CD8-positive, alpha-beta T cell (primary cell): ENCODE measurements at regions of chr11 and their contacts with region 1.

Region 1: GRCh38 chr11:117946842-117947526 is 17.8 kb upstream of the TMPRSS13 start:
- DNase-seq: peak; percentile 60 to 93 (median 83)
- ATAC-seq: peak; percentile 13
- H3K4me3 ChIP-seq: no peak overlapping the region
- H3K4me3 Mint-ChIP-seq: peak overlapping the region; percentile 37
- H3K27ac ChIP-seq: no peak overlapping the region
- H3K27ac Mint-ChIP-seq: peak overlapping the region; percentile 66
- H3K4me1 ChIP-seq: peaks cover 51% of the 10 kb centered on the region
- H3K4me1 Mint-ChIP-seq: peaks cover 69% of the 10 kb centered on the region
- H3K27me3 ChIP-seq: no peaks in the 10 kb centered on the region
- H3K27me3 Mint-ChIP-seq: no peaks in the 10 kb centered on the region
- CTCF ChIP-seq: peak; percentile 89

Region 2: DNA sequence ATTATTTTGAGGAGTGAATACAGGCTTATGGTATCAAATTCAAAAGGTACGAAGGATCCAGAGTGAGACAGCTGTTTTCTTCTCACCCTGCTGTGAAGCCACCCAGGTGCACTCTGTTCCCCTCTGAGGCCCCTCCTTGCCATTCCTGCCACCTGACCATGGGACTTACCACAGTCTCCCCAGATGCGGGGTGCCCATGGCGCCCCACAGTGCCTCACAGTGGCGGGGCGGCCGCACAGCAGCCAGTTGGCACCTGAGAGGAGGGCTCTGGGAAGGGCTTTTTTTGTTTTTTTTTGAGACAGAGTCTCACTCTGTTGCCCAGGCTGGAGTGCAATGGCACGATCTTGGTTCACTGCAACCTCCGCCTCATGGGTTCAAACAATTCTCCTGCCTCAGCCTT is 467.6 kb before region 1 on chr11:
- CTCF ChIA-PET with region 1: no interaction called
- POLR2A ChIA-PET with region 1: no interaction called
- intact Hi-C with region 1: no loop called
- DNase-seq: no peak
- ATAC-seq: no peak
- H3K4me3 ChIP-seq: no peak overlapping the region
- H3K4me3 Mint-ChIP-seq: no peak overlapping the region
- H3K27ac ChIP-seq: no peak overlapping the region
- H3K27ac Mint-ChIP-seq: no peak overlapping the region
- H3K4me1 ChIP-seq: no peaks in the 10 kb centered on the region
- H3K4me1 Mint-ChIP-seq: no peaks in the 10 kb centered on the region
- H3K27me3 ChIP-seq: no peaks in the 10 kb centered on the region
- H3K27me3 Mint-ChIP-seq: no peaks in the 10 kb centered on the region
- CTCF ChIP-seq: no peak

Region 3: DNA sequence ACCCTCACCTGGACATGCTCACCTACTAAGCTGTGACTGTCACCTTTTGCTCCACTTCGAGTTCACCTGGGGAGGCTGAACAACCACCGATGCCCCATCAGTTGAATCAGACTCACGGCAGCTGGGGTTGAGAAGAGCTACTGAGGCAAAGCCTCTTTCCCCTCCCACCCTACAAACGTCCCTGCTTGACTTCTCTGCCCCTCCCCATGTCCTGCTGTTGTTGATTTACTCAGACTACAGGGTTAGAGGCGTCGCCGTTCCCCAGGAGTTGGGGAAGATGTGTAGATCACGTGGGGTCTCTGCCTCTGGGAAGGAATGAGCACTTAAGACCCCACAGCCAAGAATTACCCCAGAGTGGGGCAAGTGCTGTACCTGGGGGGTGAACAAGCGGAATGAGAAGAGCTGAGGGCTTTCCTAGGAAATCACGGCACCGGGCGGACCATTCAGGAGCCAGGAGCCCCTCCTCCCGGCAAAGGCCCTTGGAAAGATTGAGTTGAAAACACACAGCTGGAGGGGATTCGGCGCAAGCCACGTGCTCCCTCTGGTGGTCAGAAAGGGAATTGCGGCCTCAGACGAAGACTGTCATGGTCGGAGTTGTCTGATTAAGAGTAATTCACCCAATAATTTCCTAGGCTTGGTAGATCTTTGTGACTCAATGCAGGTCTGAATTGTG is 129.5 kb before region 1 on chr11:
- CTCF ChIA-PET with region 1: interaction called, 258 read pairs
- POLR2A ChIA-PET with region 1: interaction called, 13 read pairs
- intact Hi-C with region 1: loop called in 1 of 2 experiments (anchors 1 kb)
- DNase-seq: peak; percentile 73 to 90 (median 85)
- ATAC-seq: peak; percentile 24
- H3K4me3 ChIP-seq: no peak overlapping the region
- H3K4me3 Mint-ChIP-seq: no peak overlapping the region
- H3K27ac ChIP-seq: peak overlapping the region in 1 of 2 experiments; percentile 83
- H3K27ac Mint-ChIP-seq: peak overlapping the region; percentile 80
- H3K4me1 ChIP-seq: peaks cover 60% of the 10 kb centered on the region
- H3K4me1 Mint-ChIP-seq: peaks cover 59% of the 10 kb centered on the region
- H3K27me3 ChIP-seq: no peaks in the 10 kb centered on the region
- H3K27me3 Mint-ChIP-seq: no peaks in the 10 kb centered on the region
- CTCF ChIP-seq: peak; percentile 96

Region 4: GRCh38 chr11:117861151-117862018 is 85.6 kb before region 1 on chr11:
- CTCF ChIA-PET with region 1: interaction called, 19 read pairs
- POLR2A ChIA-PET with region 1: no interaction called
- intact Hi-C with region 1: no loop called
- DNase-seq: peak in 2 of 9 experiments; percentile 8 to 29
- ATAC-seq: no peak
- H3K4me3 ChIP-seq: no peak overlapping the region
- H3K4me3 Mint-ChIP-seq: no peak overlapping the region
- H3K27ac ChIP-seq: no peak overlapping the region
- H3K27ac Mint-ChIP-seq: no peak overlapping the region
- H3K4me1 ChIP-seq: no peaks in the 10 kb centered on the region
- H3K4me1 Mint-ChIP-seq: no peaks in the 10 kb centered on the region
- H3K27me3 ChIP-seq: no peaks in the 10 kb centered on the region
- H3K27me3 Mint-ChIP-seq: peaks cover 2% of the 10 kb centered on the region
- CTCF ChIP-seq: no peak

Region 5: DNA sequence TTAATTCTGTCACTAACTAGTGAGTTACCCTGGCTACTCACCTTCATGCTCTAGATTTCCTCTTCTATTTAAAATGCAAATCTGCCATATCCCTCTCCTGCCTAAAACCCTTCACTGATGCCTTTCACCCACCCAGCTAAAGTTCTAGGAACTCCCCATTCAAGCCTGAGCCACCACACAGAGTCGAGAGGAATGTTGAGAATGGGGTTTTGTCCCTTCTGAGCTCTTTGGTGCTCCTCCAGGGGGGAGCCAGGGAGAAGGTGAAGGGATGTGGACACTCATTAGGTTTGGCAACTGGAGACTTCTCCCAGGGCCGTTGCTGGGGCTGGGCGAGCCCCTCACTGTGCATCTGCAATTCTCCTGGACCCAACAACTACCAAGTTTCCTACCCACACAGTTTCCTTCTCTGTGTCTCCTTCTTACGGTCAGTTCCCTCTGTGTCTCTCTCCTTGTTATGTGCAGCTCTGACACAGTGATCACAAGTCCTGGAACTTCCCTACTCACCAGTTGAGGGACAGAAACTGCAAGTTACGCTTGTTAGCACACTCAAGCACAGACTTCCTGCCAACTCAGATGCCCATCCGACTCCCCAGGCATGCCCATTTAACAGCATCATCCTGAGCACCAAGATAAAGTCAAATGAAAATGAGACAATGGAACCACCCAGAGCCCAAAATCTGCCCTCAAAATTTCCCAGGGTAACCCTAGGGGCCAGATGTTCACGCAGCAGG is 32.7 kb after region 1 on chr11:
- CTCF ChIA-PET with region 1: interaction called, 403 read pairs
- POLR2A ChIA-PET with region 1: interaction called, 438 read pairs
- intact Hi-C with region 1: no loop called
- DNase-seq: peak in 2 of 9 experiments; percentile 53 to 66
- ATAC-seq: peak; percentile 45
- H3K4me3 ChIP-seq: no peak overlapping the region
- H3K4me3 Mint-ChIP-seq: peak overlapping the region; percentile 13
- H3K27ac ChIP-seq: peak overlapping the region in 1 of 2 experiments; percentile 24
- H3K27ac Mint-ChIP-seq: peak overlapping the region; percentile 49
- H3K4me1 ChIP-seq: peaks cover 70% of the 10 kb centered on the region
- H3K4me1 Mint-ChIP-seq: peaks cover 76% of the 10 kb centered on the region
- H3K27me3 ChIP-seq: no peaks in the 10 kb centered on the region
- H3K27me3 Mint-ChIP-seq: no peaks in the 10 kb centered on the region
- CTCF ChIP-seq: no peak

Region 6: DNA sequence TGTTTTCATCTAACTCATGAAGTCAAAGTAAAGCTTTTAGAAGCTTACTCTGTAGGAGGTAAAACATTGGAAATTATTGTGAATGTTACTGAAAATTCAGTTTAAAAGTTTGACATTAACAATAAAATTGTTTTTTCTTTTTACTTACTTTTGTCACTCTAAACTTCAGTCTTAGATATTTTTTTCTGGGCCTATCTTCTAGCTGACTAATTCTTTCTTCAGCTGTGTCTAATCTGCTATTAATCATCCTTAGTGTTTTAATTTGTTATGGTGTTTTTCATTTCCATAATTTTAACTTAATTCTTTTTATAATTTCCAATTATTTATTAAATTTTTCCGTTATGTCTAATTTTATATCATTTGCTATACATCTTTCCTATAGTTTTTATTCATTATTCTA is 74.2 kb after region 1 on chr11:
- CTCF ChIA-PET with region 1: interaction called, 15 read pairs
- POLR2A ChIA-PET with region 1: interaction called, 15 read pairs
- intact Hi-C with region 1: no loop called
- DNase-seq: no peak
- ATAC-seq: no peak
- H3K4me3 ChIP-seq: no peak overlapping the region
- H3K4me3 Mint-ChIP-seq: no peak overlapping the region
- H3K27ac ChIP-seq: no peak overlapping the region
- H3K27ac Mint-ChIP-seq: no peak overlapping the region
- H3K4me1 ChIP-seq: peaks cover 13% of the 10 kb centered on the region
- H3K4me1 Mint-ChIP-seq: peaks cover 32% of the 10 kb centered on the region
- H3K27me3 ChIP-seq: no peaks in the 10 kb centered on the region
- H3K27me3 Mint-ChIP-seq: no peaks in the 10 kb centered on the region
- CTCF ChIP-seq: no peak

Region 7: GRCh38 chr11:118071416-118072030 is 124.5 kb after region 1 on chr11:
- CTCF ChIA-PET with region 1: interaction called, 15 read pairs
- POLR2A ChIA-PET with region 1: no interaction called
- intact Hi-C with region 1: no loop called
- DNase-seq: no peak
- ATAC-seq: no peak
- H3K4me3 ChIP-seq: no peak overlapping the region
- H3K4me3 Mint-ChIP-seq: no peak overlapping the region
- H3K27ac ChIP-seq: no peak overlapping the region
- H3K27ac Mint-ChIP-seq: no peak overlapping the region
- H3K4me1 ChIP-seq: no peaks in the 10 kb centered on the region
- H3K4me1 Mint-ChIP-seq: no peaks in the 10 kb centered on the region
- H3K27me3 ChIP-seq: no peaks in the 10 kb centered on the region
- H3K27me3 Mint-ChIP-seq: peaks cover 2% of the 10 kb centered on the region
- CTCF ChIP-seq: no peak